WTC11 (cell line): ENCODE measurements at regions of chr6 and their contacts with region 1.

Region 1: GRCh38 chr6:41683510-41684310 is 45.4 kb downstream of the MDFI start:
- DNase-seq: peak; percentile 82
- ATAC-seq: peak; percentile 50
- H3K4me3 Mint-ChIP-seq: peak overlapping the region; percentile 54
- H3K27ac Mint-ChIP-seq: no peak overlapping the region
- H3K4me1 Mint-ChIP-seq: peaks cover 47% of the 10 kb centered on the region
- H3K27me3 Mint-ChIP-seq: peaks cover 9% of the 10 kb centered on the region
- CTCF ChIP-seq: peak; percentile 86

Region 2: GRCh38 chr6:41367700-41368099 is 316.0 kb before region 1 on chr6:
- CTCF ChIA-PET with region 1: interaction called, 152 read pairs
- POLR2A ChIA-PET with region 1: interaction called, 3 read pairs
- DNase-seq: peak; percentile 84
- ATAC-seq: peak; percentile 77
- H3K4me3 Mint-ChIP-seq: no peak overlapping the region
- H3K27ac Mint-ChIP-seq: no peak overlapping the region
- H3K4me1 Mint-ChIP-seq: peaks cover 30% of the 10 kb centered on the region
- H3K27me3 Mint-ChIP-seq: peaks cover 75% of the 10 kb centered on the region
- CTCF ChIP-seq: peak; percentile 58

Region 3: DNA sequence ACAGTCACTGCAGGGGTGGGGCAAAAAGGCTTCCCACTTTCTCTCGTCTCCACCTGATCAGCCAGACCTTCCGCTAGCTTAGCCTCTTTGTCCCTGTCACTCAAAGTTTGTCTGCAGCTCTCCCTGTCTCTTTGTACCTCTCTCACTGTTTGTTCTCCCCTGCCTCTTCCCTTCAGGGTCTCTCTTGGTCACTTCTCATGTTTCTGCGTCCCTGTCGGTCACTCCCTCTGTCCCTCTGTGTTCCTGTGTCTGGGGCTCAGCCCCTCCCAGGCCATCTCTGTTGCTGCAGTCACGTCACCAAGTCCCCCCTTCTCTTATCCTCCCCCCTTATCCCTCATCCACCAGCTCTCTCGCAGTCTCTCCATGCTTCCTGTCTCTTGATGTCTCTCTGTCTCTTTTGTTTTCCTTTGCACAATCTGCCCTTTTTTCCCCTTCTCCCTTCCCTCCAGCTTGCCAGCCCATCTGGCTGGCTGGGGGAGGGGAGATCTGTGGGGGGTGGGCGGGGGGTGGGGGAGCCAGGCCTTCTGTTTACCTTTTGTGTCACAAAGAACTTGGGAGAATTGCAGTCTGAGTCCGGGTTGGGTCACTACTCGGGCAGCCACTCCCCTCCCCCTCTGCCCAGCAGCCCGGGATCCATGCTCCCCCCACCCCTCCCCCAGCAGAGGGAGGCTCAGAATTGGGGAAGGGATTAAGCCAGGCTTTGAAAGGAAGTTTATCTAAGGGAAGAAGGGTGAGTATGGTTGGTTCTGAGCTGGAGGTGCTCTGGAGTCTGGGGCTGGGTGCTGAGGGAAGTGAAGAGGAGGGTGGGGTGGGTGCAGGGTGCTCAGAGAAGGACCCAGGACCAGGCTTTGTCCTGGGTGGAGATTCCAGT is 105.3 kb before region 1 on chr6:
- CTCF ChIA-PET with region 1: interaction called, 18 read pairs
- POLR2A ChIA-PET with region 1: no interaction called
- DNase-seq: peak; percentile 81
- ATAC-seq: peak; percentile 71
- H3K4me3 Mint-ChIP-seq: peak overlapping the region; percentile 57
- H3K27ac Mint-ChIP-seq: peak overlapping the region; percentile 99
- H3K4me1 Mint-ChIP-seq: peaks cover 83% of the 10 kb centered on the region
- H3K27me3 Mint-ChIP-seq: no peaks in the 10 kb centered on the region; the same call in 1 of the 2 replicates
- CTCF ChIP-seq: no peak

Region 4: GRCh38 chr6:41608443-41609151 is 75.1 kb before region 1 on chr6:
- CTCF ChIA-PET with region 1: interaction called, 144 read pairs
- POLR2A ChIA-PET with region 1: interaction called, 3 read pairs
- DNase-seq: no peak
- ATAC-seq: peak; percentile 47; the same call in 1 of the 2 replicates
- H3K4me3 Mint-ChIP-seq: no peak overlapping the region
- H3K27ac Mint-ChIP-seq: no peak overlapping the region
- H3K4me1 Mint-ChIP-seq: peaks cover 3% of the 10 kb centered on the region; the same call in 1 of the 2 replicates
- H3K27me3 Mint-ChIP-seq: peaks cover 6% of the 10 kb centered on the region
- CTCF ChIP-seq: no peak

Region 5: GRCh38 chr6:41672821-41673703 is 10.6 kb before region 1 on chr6:
- CTCF ChIA-PET with region 1: interaction called, 10 read pairs
- POLR2A ChIA-PET with region 1: no interaction called
- DNase-seq: no peak
- ATAC-seq: peak; percentile 58
- H3K4me3 Mint-ChIP-seq: no peak overlapping the region
- H3K27ac Mint-ChIP-seq: no peak overlapping the region
- H3K4me1 Mint-ChIP-seq: peaks cover 43% of the 10 kb centered on the region
- H3K27me3 Mint-ChIP-seq: peaks cover 18% of the 10 kb centered on the region
- CTCF ChIP-seq: no peak

Region 6: DNA sequence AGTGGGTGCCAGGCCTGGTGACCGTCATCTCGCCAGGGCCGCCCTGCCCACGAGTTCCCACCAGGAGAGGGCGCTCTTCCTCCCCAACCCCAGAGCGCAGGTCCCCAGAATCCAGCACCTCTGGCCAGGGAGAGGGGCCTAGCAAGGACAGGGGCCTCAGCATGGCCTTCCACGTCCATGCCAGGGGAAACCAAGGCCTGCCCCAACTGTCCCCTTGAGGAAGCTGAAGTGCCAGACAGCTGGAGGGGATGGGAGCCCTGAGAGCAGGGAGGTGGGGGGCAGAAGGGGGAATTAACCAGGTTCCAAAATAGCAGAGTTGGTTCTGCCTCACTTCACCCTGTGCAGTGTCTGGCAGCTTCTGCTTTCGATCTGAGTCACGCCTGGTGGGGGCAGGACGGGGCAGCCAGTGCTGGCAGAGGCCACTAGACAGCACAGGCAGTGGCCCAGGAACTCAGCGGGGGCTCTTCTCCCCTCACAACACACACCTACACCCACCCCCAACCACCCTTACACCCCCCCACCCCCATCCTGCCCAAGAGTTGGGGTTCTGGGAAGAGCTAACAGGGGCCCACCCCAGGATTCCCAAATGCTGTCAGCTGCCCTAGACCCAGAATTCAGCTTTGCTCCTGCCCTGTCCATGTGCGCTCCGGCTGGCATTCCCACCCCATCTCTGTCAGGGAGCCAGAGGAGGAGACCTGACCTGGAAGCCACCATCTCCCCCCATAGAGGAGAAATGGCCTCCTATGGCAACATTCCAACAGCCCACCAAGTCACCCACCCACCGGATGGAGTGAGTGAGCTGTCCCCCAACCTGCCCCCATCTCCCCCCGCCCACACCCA is 22.5 kb after region 1 on chr6:
- CTCF ChIA-PET with region 1: interaction called, 21 read pairs
- POLR2A ChIA-PET with region 1: no interaction called
- DNase-seq: peak; percentile 81
- ATAC-seq: peak; percentile 91
- H3K4me3 Mint-ChIP-seq: no peak overlapping the region
- H3K27ac Mint-ChIP-seq: no peak overlapping the region
- H3K4me1 Mint-ChIP-seq: peaks cover 6% of the 10 kb centered on the region
- H3K27me3 Mint-ChIP-seq: no peaks in the 10 kb centered on the region
- CTCF ChIP-seq: peak; percentile 90

Region 7: DNA sequence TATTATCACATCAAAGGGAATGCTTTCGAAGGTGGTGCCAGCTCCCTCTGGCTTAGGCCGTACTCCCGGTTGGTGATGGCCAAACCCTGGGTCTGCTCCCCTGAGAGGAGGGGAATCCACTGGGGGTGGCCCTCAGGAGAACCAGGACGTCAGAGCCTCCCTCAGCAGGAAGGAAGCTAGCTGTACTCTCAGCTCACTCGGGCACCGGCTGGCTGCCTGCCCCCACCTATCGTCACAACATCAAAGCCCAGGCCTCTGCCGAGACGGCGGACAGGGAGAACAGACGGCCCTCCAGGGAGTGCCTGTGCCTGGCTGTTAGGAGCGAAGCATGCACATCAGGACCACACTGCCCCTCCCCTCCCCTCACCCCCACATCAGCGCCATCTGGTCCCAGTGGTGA is 72.6 kb after region 1 on chr6:
- CTCF ChIA-PET with region 1: no interaction called
- POLR2A ChIA-PET with region 1: no interaction called
- DNase-seq: no peak
- ATAC-seq: no peak
- H3K4me3 Mint-ChIP-seq: no peak overlapping the region
- H3K27ac Mint-ChIP-seq: no peak overlapping the region
- H3K4me1 Mint-ChIP-seq: peaks cover 6% of the 10 kb centered on the region
- H3K27me3 Mint-ChIP-seq: peaks cover 3% of the 10 kb centered on the region; the same call in 1 of the 2 replicates
- CTCF ChIP-seq: no peak